ENCODE measurements at regions of chr16 and their contacts with region 1.

Region 1: GRCh38 chr16:4271176-4272066 is 1.4 kb downstream of the TFAP4 start:
- DNase-seq: peak; percentile 85
- H3K4me3 Mint-ChIP-seq: peak overlapping the region; percentile 88
- H3K27ac Mint-ChIP-seq: peak overlapping the region; percentile 94
- H3K4me1 Mint-ChIP-seq: peaks cover 7% of the 10 kb centered on the region
- H3K27me3 Mint-ChIP-seq: peaks cover 2% of the 10 kb centered on the region

Region 2: DNA sequence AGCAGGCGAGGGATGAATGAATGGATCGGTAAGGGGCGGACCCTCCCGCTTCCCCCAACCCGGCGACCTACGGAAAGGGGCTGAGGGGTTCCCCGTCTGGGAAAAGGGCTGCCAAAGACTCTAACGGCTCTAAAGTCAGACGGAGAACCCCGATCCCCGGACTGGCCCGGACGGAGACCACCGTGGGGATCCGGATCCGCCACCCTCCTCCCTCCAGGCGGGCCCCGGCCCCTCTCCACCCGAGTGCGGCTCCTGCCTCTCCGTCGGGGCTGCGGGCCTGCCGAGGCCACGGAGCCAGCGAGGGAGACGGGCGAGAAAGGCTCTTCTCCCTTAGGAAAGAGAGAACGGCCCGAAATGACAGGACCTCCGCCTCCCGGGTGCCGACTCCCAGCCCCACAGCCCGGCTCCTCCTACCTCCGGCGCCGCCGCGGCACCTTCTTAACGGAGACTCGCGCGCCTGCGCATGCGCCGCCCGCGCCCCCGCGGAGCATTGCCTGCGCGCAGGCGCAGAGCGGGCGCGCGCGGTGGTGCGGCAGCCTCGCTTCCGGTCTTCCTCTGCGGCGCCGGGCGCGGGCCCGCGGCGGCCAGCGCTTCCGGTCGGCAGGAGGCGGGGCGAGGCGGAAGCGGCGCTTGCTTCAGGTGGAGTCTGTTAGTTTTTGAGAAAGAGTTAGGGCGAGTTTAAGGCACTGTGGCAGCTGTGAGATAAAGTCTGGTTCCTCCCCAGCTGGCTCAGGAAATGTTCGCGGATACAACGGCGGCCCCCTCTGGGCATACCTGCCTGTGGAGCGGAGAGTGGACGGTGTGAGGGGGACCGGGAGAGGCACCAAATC is 660.1 kb before region 1 on chr16 and contains the start of gene SLX4:
- intact Hi-C with region 1: loop called (anchors 5 kb)
- DNase-seq: peak; percentile 93
- H3K4me3 Mint-ChIP-seq: peak within 1 kb of the TSS; percentile 98
- H3K27ac Mint-ChIP-seq: peak within 1 kb of the TSS; percentile 97
- H3K4me1 Mint-ChIP-seq: peaks cover 52% of the 10 kb centered on the region
- H3K27me3 Mint-ChIP-seq: no peaks in the 10 kb centered on the region
- total RNA-seq, gene SLX4: 10.3 and 10.8 TPM in 2 replicates

Region 3: GRCh38 chr16:4253394-4254150 is 17.8 kb before region 1 on chr16:
- intact Hi-C with region 1: loop called (anchors 1 kb)
- DNase-seq: peak; percentile 99
- H3K4me3 Mint-ChIP-seq: peak overlapping the region; percentile 94
- H3K27ac Mint-ChIP-seq: peak overlapping the region; percentile 98
- H3K4me1 Mint-ChIP-seq: peaks cover 4% of the 10 kb centered on the region
- H3K27me3 Mint-ChIP-seq: peaks cover 2% of the 10 kb centered on the region

Region 4: GRCh38 chr16:4288148-4288921 is 16.9 kb after region 1 on chr16:
- intact Hi-C with region 1: no loop called
- DNase-seq: peak; percentile 70
- H3K4me3 Mint-ChIP-seq: no peak overlapping the region
- H3K27ac Mint-ChIP-seq: peak overlapping the region; percentile 63
- H3K4me1 Mint-ChIP-seq: peaks cover 14% of the 10 kb centered on the region
- H3K27me3 Mint-ChIP-seq: no peaks in the 10 kb centered on the region

Region 5: GRCh38 chr16:4371357-4372000 is 100.1 kb after region 1 on chr16 and contains the start of gene VASN:
- intact Hi-C with region 1: loop called (anchors 1 kb)
- DNase-seq: peak; percentile 59
- H3K4me3 Mint-ChIP-seq: peak within 1 kb of the TSS; percentile 66
- H3K27ac Mint-ChIP-seq: no peak within 1 kb of the TSS
- H3K4me1 Mint-ChIP-seq: no peaks in the 10 kb centered on the region
- H3K27me3 Mint-ChIP-seq: no peaks in the 10 kb centered on the region
- total RNA-seq, gene VASN: 0.18 TPM in 1 of 2 replicates, not detected in the other

Region 6: DNA sequence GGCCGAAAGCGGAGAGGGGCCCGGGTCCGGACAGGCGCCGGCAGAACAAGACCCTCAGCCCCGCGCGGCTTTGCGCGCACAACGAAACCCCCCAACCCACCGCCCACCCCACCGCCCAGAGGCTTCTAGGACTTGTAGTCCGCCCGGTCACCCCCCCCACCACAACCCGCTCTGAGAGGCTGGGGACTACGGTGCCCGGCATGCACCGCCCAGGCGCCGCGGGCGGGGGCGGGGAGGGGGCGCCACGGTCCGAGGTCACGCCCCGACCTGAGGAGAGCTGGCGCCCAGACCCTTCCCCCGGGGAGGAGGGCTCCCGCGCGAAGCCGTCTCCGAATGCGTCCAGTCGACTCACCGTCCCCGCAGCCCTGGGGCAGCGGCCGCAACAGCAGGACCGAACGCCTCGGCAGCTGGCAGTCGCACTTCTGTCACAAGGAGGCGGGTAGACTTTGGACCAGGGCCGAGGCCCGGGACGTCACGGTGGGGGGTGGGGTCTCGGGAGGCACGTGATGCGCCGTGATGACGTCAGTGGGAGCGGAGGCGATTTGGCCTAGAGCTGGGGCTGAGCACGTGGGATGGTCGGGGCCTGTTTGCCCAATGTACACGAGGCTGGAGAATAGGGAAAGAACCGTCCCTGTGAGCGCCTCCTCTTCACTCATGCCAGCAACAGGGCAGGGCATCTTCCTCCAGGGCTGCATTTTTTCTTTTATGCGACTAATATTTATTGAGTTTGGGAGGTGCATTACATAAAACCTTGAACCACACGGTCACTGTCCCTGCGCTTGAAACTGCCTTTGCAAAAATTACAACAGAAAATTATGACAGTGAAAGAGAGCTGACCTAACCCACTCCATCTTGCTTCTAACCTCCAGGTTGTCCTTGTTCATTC is 267.2 kb after region 1 on chr16 and contains the start of gene CDIP1:
- intact Hi-C with region 1: loop called (anchors 10 kb)
- DNase-seq: peak; percentile 86
- H3K4me3 Mint-ChIP-seq: peak within 1 kb of the TSS; percentile 80
- H3K27ac Mint-ChIP-seq: peak within 1 kb of the TSS; percentile 82
- H3K4me1 Mint-ChIP-seq: peaks cover 40% of the 10 kb centered on the region
- H3K27me3 Mint-ChIP-seq: peaks cover 5% of the 10 kb centered on the region
- total RNA-seq, gene CDIP1: 61.6 and 62.7 TPM in 2 replicates

Region 7: GRCh38 chr16:4846891-4847773 is 575.7 kb after region 1 on chr16 and contains the starts of genes GLYR1 and UBN1:
- intact Hi-C with region 1: loop called (anchors 5 kb)
- DNase-seq: peak; percentile 99
- H3K4me3 Mint-ChIP-seq: peak within 1 kb of the TSS; percentile 91
- H3K27ac Mint-ChIP-seq: peak within 1 kb of the TSS; percentile 80
- H3K4me1 Mint-ChIP-seq: peaks cover 56% of the 10 kb centered on the region
- H3K27me3 Mint-ChIP-seq: no peaks in the 10 kb centered on the region
- total RNA-seq, gene GLYR1: 119 and 120 TPM in 2 replicates
- total RNA-seq, gene UBN1: 39.6 and 42.6 TPM in 2 replicates